Left ventricle myocardium superior (tissue), 1 donor: ENCODE measurements at regions of chr2 and their contacts with region 1.

Region 1: DNA sequence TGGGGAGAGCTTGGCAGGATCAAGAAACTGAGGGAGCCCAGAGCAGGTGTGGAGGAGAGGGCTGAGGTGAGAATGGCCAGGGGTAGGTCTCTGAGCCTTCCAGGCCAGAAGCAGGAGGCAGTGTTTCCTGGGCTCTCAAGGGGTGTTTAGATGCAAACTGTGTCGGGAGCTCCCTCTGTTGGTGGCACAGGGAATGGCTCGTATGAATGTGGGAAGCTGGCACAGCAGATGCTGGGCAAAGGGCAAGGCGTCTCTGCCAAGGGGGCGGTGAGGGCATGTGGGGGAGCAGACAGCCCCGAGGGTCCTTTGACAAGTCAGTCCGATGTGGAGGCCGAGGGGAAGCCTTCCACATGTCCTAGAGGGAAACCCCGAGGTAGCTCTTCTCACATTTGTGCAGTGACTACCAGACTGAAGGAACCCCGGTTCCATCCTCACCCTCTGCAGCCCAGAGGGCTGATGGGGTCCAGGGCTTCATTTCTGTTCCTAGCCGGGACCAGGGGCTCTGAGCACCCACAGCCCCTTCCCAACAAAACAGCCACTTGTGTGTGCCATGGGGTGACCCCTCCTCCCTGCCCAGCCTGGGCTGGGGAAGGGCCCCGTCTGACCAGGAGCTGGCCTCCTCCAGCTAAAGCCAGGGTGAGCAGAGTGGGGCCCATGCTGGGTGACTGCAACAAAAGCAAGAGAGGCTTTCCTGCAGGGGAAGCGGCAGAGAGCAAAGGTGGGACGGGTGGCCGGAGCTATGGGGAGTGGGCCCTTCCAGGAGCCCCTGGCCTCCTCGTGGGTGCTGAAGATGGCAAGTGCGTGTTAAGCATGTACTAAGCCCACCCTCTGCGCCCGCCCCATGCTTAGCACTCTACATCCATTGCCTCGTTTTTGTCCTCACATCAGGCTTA is 103.4 kb downstream of the SEPTIN10 start:
- DNase-seq: peak; percentile 84
- ATAC-seq: peak; percentile 73

Region 2: DNA sequence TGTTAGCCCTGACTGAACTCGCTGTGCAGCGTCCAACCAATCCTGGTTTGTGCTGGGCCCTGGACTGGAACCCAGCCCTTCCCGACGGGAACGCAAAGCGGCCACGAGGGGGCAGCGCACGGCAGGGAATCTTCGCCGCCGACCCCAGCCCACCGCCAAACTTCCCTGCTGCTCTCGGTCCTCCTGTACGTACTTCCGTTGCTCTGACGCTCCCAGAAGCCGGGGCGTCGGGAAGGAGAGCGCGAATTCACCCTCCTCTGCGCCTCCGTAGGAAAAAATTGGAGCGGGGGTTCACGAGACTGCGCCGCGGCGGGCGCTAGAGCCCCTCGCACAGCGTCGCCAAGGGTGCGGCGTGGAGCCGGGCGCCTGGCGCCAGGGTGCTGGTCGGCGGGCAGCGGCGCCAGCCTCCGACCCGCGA is 382.3 kb before region 1 on chr2:
- intact Hi-C with region 1: loop called (anchors 10 kb)
- DNase-seq: peak; percentile 89
- ATAC-seq: peak; percentile 90

Region 3: GRCh38 chr2:110204780-110205385 is 694.5 kb after region 1 on chr2 and contains the start of gene NPHP1:
- intact Hi-C with region 1: no loop called
- DNase-seq: peak; percentile 92
- ATAC-seq: peak; percentile 94
- total RNA-seq, gene NPHP1: 4.1 TPM